Sciatic nerve (tissue), 2 donors: ENCODE measurements at regions of chr1 and their contacts with region 1.

Region 1: GRCh38 chr1:11641776-11642305 is 12.4 kb downstream of the FBXO2 start:
- DNase-seq: no peak
- ATAC-seq: no peak

Region 2: GRCh38 chr1:11037740-11038182 is 604.1 kb before region 1 on chr1:
- intact Hi-C with region 1: loop called (anchors 5 kb)
- DNase-seq: peak; percentile 95
- ATAC-seq: peak; percentile 96